Activated T-helper 2 cell treated with anti-CD3 and anti-CD28 coated beads, Interferon-gamma antibody, Interleukin-2, Interleukin-4, amounts not matched to agents 10 μg/mL and 5 μg/mL and 100 μg/mL, durations not matched to agents 14 hours and 24 hours and 36 hours (primary cell): ENCODE measurements at regions of chr10 and their contacts with region 1.

Region 1: DNA sequence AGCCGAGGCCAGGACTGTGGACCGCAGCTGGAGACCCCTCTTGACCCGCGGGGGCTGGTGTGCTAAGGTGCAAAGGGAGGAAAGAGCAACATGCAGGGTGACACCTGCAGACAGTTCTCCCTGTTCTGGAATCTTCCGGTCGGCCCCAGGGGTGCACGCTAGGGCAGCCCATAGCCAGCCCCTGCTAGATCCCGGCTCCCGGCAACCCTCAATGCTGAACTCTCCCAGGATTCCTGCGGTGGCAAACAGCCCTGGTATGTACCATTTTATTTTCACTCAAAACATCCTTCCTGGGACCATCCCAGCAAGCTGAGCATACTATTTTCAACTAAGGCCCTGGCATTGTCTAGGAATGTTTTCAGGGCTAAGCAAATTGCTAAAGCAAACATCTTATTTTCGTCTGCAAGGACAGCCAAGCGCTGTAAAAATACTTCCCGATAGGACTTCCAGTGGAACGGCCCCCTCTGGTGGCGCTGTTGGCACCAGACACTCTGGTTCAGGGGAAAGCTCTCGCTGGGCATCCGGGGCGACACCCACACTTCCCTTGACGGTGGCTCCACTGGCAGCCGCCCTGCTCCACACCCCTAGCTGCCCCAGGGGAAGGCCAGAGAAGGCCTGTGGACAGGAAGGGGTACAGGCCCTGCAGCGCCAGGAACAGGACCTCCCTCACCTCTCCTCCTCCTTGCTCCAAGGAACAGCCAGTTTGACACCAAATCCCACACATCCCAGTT is 99.4 kb downstream of the CTBP2 start:
- DNase-seq: no peak
- H3K4me3 Mint-ChIP-seq: no peak overlapping the region
- H3K27ac Mint-ChIP-seq: no peak overlapping the region
- H3K4me1 Mint-ChIP-seq: peaks cover 16% of the 10 kb centered on the region
- H3K27me3 Mint-ChIP-seq: peaks cover 23% of the 10 kb centered on the region

Region 2: GRCh38 chr10:125084191-125084613 is 23.2 kb after region 1 on chr10:
- intact Hi-C with region 1: no loop called
- DNase-seq: no peak
- H3K4me3 Mint-ChIP-seq: no peak overlapping the region
- H3K27ac Mint-ChIP-seq: no peak overlapping the region
- H3K4me1 Mint-ChIP-seq: no peaks in the 10 kb centered on the region
- H3K27me3 Mint-ChIP-seq: no peaks in the 10 kb centered on the region

Region 3: GRCh38 chr10:125144693-125145623 is 84.0 kb after region 1 on chr10:
- intact Hi-C with region 1: loop called (anchors 10 kb)
- DNase-seq: no peak
- H3K4me3 Mint-ChIP-seq: no peak overlapping the region
- H3K27ac Mint-ChIP-seq: no peak overlapping the region
- H3K4me1 Mint-ChIP-seq: no peaks in the 10 kb centered on the region
- H3K27me3 Mint-ChIP-seq: peaks cover 28% of the 10 kb centered on the region

Region 4: DNA sequence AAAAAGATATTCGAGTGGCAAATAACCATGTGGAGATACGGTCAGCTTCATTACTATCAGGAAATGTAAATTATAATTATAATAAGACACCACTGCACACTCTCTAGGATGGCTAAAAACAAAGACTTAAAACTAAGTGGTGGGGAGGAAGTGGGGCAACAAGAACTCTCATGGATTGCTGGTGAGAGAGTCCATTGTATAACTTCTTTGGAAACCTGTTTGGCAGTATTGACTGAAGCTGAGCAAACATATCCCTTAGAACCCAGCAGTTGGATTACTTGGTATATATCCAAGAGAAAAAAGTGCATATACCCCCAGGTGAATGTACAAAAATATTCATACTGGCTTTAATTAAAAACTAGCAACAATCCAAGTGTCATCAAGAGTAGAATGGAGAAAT is 233.1 kb after region 1 on chr10:
- intact Hi-C with region 1: no loop called
- DNase-seq: no peak
- H3K4me3 Mint-ChIP-seq: no peak overlapping the region
- H3K27ac Mint-ChIP-seq: no peak overlapping the region
- H3K4me1 Mint-ChIP-seq: no peaks in the 10 kb centered on the region
- H3K27me3 Mint-ChIP-seq: no peaks in the 10 kb centered on the region